ENCODE measurements at regions of chr5 and their contacts with region 1.

Region 1: GRCh38 chr5:156647034-156647451 is 203.1 kb upstream of the PPP1R2B start:
- DNase-seq: no peak
- ATAC-seq: no peak
- H3K4me3 Mint-ChIP-seq: no peak overlapping the region
- H3K27ac Mint-ChIP-seq: no peak overlapping the region
- H3K4me1 Mint-ChIP-seq: no peaks in the 10 kb centered on the region
- H3K27me3 Mint-ChIP-seq: peaks cover 11% of the 10 kb centered on the region

Region 2: GRCh38 chr5:156675395-156675794 is 28.4 kb after region 1 on chr5:
- CTCF ChIA-PET with region 1: no interaction called
- POLR2A ChIA-PET with region 1: no interaction called
- intact Hi-C with region 1: loop called in 1 of 2 experiments (anchors 2 kb)
- DNase-seq: no peak
- ATAC-seq: no peak
- H3K4me3 Mint-ChIP-seq: no peak overlapping the region
- H3K27ac Mint-ChIP-seq: no peak overlapping the region
- H3K4me1 Mint-ChIP-seq: no peaks in the 10 kb centered on the region
- H3K27me3 Mint-ChIP-seq: peaks cover 5% of the 10 kb centered on the region

Region 3: DNA sequence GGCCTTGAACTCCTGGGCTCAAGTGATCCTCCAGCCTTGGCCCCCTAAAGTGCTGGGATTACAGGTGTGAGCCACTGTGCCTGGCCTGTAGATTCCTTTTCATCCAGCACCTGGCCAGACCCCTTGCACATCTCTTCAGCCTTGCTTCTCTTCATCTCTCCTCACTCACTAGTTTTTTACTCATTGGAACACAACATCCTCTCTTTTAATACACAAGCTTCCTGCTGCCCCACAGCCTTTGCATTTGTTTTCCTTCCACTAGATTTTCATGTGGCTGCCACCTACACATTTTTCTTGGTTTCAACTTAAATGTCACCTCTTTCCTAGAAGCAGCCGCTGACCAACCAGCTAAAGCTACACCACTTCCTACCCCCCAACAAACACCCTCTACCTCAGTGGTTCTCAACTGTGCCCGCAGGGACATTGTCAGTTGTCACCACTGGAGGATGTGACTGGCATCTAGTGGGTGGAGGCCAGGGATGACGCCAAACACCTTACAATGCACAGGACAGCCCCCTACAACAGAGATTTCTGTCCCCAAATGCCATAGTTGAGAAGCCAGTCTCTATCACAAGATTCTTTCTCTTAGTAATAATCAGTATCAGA is 378.2 kb after region 1 on chr5:
- CTCF ChIA-PET with region 1: no interaction called
- POLR2A ChIA-PET with region 1: no interaction called
- intact Hi-C with region 1: no loop called
- DNase-seq: peak; percentile 87
- ATAC-seq: peak; percentile 97
- H3K4me3 Mint-ChIP-seq: peak overlapping the region; percentile 8
- H3K27ac Mint-ChIP-seq: peak overlapping the region; percentile 92
- H3K4me1 Mint-ChIP-seq: peaks cover 32% of the 10 kb centered on the region
- H3K27me3 Mint-ChIP-seq: no peaks in the 10 kb centered on the region

Region 4: DNA sequence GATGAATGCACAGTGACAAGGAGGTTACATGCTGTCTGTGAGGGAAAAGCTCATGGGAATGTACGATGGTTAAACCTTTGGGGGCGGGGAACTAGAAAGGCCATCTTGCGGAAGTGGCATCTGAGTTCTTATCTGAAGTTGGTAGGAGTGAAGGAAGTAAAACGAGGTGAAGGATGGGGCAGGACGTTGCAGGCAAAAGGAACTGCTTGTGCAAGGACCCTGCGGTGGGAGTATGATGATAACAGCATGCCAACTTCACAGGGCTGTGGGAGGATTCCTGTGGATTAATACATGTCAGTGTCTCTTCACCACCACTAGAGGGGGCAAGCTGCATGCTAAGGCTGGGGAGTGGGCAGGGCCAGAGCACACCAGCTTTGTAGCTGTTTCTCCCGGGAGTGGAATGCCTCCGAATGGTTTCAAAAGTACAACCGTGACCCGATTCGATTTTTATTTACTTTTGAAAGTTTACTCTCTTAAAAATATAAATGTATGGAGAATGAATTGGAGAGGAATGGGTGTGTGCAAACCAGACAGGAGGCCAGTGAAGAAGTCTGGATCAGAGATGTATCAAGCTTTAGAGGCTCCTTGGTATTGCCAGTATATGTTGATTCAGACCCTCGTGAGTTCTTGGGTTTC is 681.4 kb after region 1 on chr5:
- CTCF ChIA-PET with region 1: no interaction called
- POLR2A ChIA-PET with region 1: no interaction called
- intact Hi-C with region 1: no loop called
- DNase-seq: peak; percentile 77
- ATAC-seq: peak; percentile 97
- H3K4me3 Mint-ChIP-seq: peak overlapping the region; percentile 9
- H3K27ac Mint-ChIP-seq: peak overlapping the region; percentile 85
- H3K4me1 Mint-ChIP-seq: peaks cover 50% of the 10 kb centered on the region
- H3K27me3 Mint-ChIP-seq: no peaks in the 10 kb centered on the region